BJ (cell line): ENCODE measurements at regions of chr12 and their contacts with region 1.

Region 1: GRCh38 chr12:89960011-89960507 is 251.4 kb upstream of the ATP2B1 start:
- DNase-seq: no peak
- H3K4me3 ChIP-seq: no peak overlapping the region
- H3K27me3 ChIP-seq: no peaks in the 10 kb centered on the region
- CTCF ChIP-seq: no peak

Region 2: GRCh38 chr12:89949457-89950195 is 10.4 kb before region 1 on chr12:
- CTCF ChIA-PET with region 1: interaction called, 10 read pairs
- POLR2A ChIA-PET with region 1: no interaction called
- DNase-seq: peak; percentile 96
- H3K4me3 ChIP-seq: no peak overlapping the region
- H3K27me3 ChIP-seq: no peaks in the 10 kb centered on the region
- CTCF ChIP-seq: peak; percentile 21; the same call in 1 of the 2 replicates